Activated CD8-positive, alpha-beta T cell treated with anti-CD3 and anti-CD28 coated beads for 36 hours (primary cell): ENCODE measurements at regions of chr5 and their contacts with region 1.

Region 1: DNA sequence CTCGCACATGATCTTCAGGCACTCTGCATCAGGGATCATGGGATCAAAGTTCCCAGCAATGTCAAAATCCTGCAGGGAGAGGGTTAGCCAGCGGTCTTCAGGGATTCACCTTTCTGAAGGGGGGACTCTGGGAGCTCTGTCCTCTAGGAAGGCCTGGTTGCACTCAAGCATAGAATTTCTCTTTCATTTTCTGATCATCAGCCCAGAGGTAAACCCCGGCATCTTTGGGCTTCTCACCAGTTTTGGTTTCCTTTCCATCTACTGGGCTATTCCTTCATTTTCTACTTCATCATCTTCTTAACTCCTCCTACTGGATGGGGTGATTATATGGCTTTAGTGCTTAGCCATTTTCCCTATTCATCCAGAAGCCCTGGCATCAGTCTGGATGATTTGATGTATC is 4.6 kb upstream of the DND1 start:
- DNase-seq: no peak
- ATAC-seq: no peak
- H3K4me3 Mint-ChIP-seq: no peak overlapping the region
- H3K27ac Mint-ChIP-seq: peak overlapping the region; percentile 2
- H3K4me1 Mint-ChIP-seq: peaks cover 1% of the 10 kb centered on the region
- H3K27me3 Mint-ChIP-seq: no peaks in the 10 kb centered on the region
- CTCF ChIP-seq: no peak

Region 2: GRCh38 chr5:140564196-140565023 is 113.5 kb before region 1 on chr5 and contains the starts of genes APBB3 and SLC35A4:
- CTCF ChIA-PET with region 1: no interaction called
- POLR2A ChIA-PET with region 1: no interaction called
- intact Hi-C with region 1: no loop called
- DNase-seq: peak; percentile 97
- ATAC-seq: peak; percentile 95
- H3K4me3 Mint-ChIP-seq: peak within 1 kb of the TSS; percentile 88
- H3K27ac Mint-ChIP-seq: peak within 1 kb of the TSS; percentile 90
- H3K4me1 Mint-ChIP-seq: peaks cover 54% of the 10 kb centered on the region
- H3K27me3 Mint-ChIP-seq: no peaks in the 10 kb centered on the region
- CTCF ChIP-seq: no peak
- total RNA-seq, gene APBB3: 24.9 TPM
- total RNA-seq, gene SLC35A4: 72.9 to 73.6 TPM

Region 3: GRCh38 chr5:140664359-140665119 is 13.4 kb before region 1 on chr5 and contains the start of gene WDR55:
- CTCF ChIA-PET with region 1: no interaction called
- POLR2A ChIA-PET with region 1: interaction called, 17 read pairs
- intact Hi-C with region 1: no loop called
- DNase-seq: peak; percentile 97
- ATAC-seq: peak; percentile 96
- H3K4me3 Mint-ChIP-seq: peak within 1 kb of the TSS; percentile 99
- H3K27ac Mint-ChIP-seq: peak within 1 kb of the TSS; percentile 95
- H3K4me1 Mint-ChIP-seq: peaks cover 26% of the 10 kb centered on the region
- H3K27me3 Mint-ChIP-seq: no peaks in the 10 kb centered on the region
- CTCF ChIP-seq: no peak
- total RNA-seq, gene WDR55: 30.1 to 31.8 TPM